AG04450 (cell line): ENCODE measurements at regions of chr13 and their contacts with region 1.

Region 1: DNA sequence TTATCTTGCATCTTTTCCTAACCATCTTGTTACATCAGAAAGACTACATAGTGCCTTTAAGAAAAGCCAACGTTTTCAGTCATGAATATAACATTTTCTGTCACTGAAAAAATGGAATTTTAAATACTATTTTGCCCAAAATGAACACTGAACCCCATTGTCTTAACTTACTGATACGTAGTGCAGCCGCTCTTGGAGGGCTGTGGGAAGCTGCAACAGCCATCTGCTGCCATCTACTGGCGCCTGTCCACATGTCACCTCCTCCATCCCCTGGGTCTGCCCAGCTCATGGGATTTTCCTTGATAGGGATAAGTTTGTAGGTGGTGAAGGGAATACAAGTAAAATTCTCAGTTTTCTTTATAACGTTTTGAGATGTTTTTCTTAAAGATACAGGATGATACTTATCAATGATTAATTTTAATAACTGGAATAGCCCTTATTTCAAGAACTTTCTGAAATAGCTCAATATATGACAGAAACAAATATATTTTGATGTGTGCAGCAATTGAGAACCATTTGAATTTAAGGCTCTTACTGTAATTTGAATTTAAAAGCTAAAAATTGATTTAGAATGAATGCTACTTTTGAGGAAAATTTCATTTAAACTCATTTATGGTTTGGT is 73.7 kb downstream of the GGACT start:
- DNase-seq: peak; percentile 42
- H3K4me3 ChIP-seq: no peak overlapping the region
- H3K27ac ChIP-seq: no peak overlapping the region
- H3K27me3 ChIP-seq: no peaks in the 10 kb centered on the region
- CTCF ChIP-seq: peak; percentile 99

Region 2: DNA sequence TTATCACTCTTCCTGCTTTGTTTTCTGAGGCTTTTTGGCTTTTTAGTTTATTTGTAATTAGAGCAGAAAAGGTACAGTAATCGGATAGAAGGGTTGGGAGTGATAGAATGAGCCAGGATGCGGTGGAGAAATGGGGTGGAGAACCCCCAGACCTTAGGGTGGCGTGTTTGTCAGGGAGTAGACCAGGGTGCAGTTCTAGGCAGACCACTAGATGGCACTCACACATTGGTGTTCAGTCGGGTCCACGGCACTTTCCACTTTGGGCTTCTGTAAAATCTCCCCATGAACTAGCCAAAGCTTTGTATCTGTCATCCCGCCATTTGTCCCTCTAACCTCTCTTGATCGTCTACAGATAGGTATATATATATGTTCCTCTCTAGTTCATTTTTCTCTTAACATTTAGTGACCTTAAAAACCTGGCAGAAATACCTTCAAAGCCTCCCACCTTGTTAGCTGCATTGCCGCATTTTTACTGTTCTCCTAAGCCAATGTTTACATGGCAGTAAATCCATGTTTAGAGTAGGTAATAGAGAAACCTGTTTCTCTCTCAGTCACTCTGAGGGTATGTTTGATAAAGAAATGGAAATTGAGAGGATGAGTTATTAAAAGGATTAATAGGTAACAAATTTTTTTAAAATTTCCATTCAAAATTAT is 858.7 kb before region 1 on chr13:
- CTCF ChIA-PET with region 1: interaction called, 16 read pairs
- POLR2A ChIA-PET with region 1: no interaction called
- DNase-seq: peak; percentile 18
- H3K4me3 ChIP-seq: no peak overlapping the region
- H3K27ac ChIP-seq: no peak overlapping the region
- H3K27me3 ChIP-seq: peaks cover 15% of the 10 kb centered on the region
- CTCF ChIP-seq: peak; percentile 94

Region 3: GRCh38 chr13:99916366-99917103 is 598.4 kb before region 1 on chr13:
- CTCF ChIA-PET with region 1: interaction called, 56 read pairs
- POLR2A ChIA-PET with region 1: no interaction called
- DNase-seq: peak; percentile 33
- H3K4me3 ChIP-seq: no peak overlapping the region
- H3K27ac ChIP-seq: no peak overlapping the region
- H3K27me3 ChIP-seq: peaks cover 11% of the 10 kb centered on the region
- CTCF ChIP-seq: peak; percentile 98

Region 4: GRCh38 chr13:100409132-100409531 is 105.8 kb before region 1 on chr13:
- CTCF ChIA-PET with region 1: no interaction called
- POLR2A ChIA-PET with region 1: no interaction called
- DNase-seq: no peak
- H3K4me3 ChIP-seq: no peak overlapping the region
- H3K27ac ChIP-seq: no peak overlapping the region
- H3K27me3 ChIP-seq: no peaks in the 10 kb centered on the region
- CTCF ChIP-seq: no peak